ENCODE measurements at regions of chr16 and their contacts with region 1.

Region 1: DNA sequence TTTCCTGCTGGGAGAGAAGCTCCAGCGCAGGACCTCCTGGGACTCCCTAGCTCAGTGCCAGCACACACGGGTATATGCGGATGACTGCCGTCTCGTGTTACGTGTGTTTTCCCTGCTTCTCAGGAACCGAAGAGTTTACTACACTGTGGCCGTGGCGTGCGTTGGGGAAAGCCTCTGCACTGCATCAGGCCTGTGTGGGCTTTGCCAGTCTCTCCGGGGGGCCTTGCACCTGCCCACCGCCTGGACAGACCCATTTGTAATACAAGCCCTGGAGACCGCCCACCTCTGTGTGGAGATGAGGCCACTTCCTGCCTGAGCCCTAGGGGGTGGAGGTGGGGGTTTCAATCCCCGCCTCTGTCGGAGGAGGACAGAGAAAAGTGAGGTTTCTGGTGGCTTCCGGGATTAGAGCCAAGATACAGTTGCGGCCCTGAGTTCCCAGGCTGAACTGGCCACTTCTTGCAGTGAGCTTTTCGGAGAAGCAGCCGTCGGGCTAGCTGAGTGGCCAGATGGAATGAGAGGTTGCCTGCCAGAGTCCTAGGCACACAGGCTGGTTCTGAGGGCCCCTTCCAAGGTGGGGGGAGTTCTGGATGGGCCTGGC is 43.4 kb upstream of the GSE1 start:
- DNase-seq: no peak
- H3K4me3 ChIP-seq: no peak overlapping the region
- H3K27ac ChIP-seq: no peak overlapping the region
- H3K4me1 ChIP-seq: peaks cover 13% of the 10 kb centered on the region
- H3K27me3 ChIP-seq: no peaks in the 10 kb centered on the region
- CTCF ChIP-seq: no peak
- EP300 ChIP-seq: no peak
- POLR2A ChIP-seq: no peak

Region 2: DNA sequence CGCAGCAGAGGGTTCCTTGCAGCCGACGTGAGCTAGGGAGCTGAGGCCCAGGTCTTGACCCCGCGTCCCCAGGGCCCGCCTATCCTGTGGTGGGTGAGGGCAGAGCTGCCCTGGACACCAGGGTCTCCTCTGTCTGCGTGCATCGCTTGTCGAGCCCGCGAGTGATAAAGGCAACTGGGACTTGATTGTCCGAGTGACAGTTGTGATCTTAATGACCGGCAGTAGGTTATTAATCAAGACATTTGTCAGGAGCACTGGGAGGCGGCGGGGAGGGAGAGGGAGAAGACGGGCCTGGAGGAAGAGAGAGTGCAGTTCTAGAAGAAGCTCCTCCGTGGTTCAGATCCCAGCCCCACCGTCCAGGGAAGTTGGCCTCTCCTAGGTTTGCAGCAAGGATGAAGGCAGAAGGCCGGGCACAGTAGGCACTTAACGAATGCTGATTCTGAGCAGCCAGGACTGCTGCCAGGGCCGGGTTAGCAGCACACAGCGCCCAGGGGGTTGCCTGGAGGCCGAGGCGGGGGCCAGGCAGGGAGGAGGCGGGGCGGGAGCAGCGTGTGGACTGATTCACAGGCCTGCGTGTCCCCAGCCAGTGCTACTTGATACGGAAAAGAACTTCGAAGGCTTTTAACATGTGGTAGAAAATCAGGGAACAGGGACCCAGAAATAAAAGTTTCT is 32.2 kb after region 1 on chr16:
- intact Hi-C with region 1: loop called in 1 of 4 experiments (anchors 5 kb)
- DNase-seq: no peak
- H3K4me3 ChIP-seq: no peak overlapping the region
- H3K27ac ChIP-seq: no peak overlapping the region
- H3K4me1 ChIP-seq: peaks cover 8% of the 10 kb centered on the region
- H3K27me3 ChIP-seq: no peaks in the 10 kb centered on the region
- CTCF ChIP-seq: no peak
- EP300 ChIP-seq: no peak
- POLR2A ChIP-seq: no peak

Region 3: DNA sequence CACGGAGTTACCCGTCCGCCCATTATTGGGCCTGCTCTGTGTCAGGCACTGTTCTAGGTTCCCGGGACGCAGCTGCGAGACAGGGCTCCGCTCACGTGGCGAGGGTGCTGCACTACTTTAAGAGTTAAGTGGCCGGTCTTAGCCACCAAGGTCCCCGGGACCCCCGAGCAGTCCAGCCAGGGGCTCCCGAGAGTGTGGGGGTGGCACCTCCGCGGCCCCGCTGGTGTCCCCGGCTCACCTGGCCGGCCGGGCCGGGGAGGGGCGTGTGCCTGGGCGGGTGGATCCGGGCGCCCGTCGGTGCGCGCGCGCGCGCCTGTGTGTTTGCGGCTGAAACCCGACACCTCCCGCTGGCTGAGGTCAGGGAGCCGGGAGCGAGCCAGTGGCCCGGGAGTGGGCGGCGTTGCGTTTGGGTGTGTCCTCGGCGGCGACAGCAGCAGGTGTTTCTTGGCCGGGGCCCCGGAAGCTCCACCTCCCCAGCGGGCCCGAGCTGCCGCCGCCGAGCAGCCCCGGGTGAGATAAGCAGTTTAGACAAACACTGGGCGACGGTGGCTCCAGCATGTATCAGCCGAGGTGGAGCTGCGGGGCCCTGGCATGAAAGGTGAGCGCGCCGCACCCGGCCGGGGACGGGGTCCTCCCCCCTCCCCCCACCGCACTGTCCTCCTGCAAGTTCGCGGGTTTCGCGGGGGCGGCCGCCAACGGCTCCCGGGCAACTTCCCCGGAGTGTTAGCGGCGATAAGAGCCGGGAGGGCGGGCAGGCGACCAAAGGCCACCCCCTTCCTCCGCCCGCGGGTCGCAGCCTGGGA is 43.3 kb after region 1 on chr16 and contains the start of gene GSE1:
- intact Hi-C with region 1: no loop called
- DNase-seq: peak; percentile 85 to 91 (median 88)
- H3K4me3 ChIP-seq: peak within 1 kb of the TSS; percentile 47
- H3K27ac ChIP-seq: peak within 1 kb of the TSS in 1 of 2 donors; percentile 14
- H3K4me1 ChIP-seq: peaks cover 24% of the 10 kb centered on the region
- H3K27me3 ChIP-seq: no peaks in the 10 kb centered on the region
- CTCF ChIP-seq: peak in 1 of 3 donors; percentile 2
- EP300 ChIP-seq: no peak
- POLR2A ChIP-seq: no peak
- total RNA-seq, gene GSE1: 37.4 to 212 (median 130) TPM

Measured in ovary (tissue), 10 donors.